Left lung (tissue), 14 donors: ENCODE measurements at regions of chr3 and their contacts with region 1.

Region 1: GRCh38 chr3:131794766-131795388 is 239.9 kb downstream of the CPNE4 start:
- DNase-seq: peak in 2 of 4 donors; percentile 16 to 54
- ATAC-seq: peak; percentile 98
- H3K4me3 ChIP-seq: no peak overlapping the region
- H3K27ac ChIP-seq: no peak overlapping the region
- H3K4me1 ChIP-seq: peaks cover 0 to 11% of the 10 kb centered on the region in 2 donors
- H3K27me3 ChIP-seq: peaks cover 0 to 9% of the 10 kb centered on the region in 2 donors
- CTCF ChIP-seq: peak; percentile 74 to 86

Region 2: GRCh38 chr3:132029182-132029902 is 234.5 kb after region 1 on chr3:
- intact Hi-C with region 1: loop called in 1 of 2 experiments (anchors 5 kb)
- DNase-seq: peak; percentile 36 to 89 (median 77)
- ATAC-seq: peak; percentile 99
- H3K4me3 ChIP-seq: no peak overlapping the region
- H3K27ac ChIP-seq: no peak overlapping the region
- H3K4me1 ChIP-seq: no peaks in the 10 kb centered on the region
- H3K27me3 ChIP-seq: peaks cover 18 to 41% of the 10 kb centered on the region in 2 donors
- CTCF ChIP-seq: peak; percentile 74 to 77